Activated naive CD4-positive, alpha-beta T cell treated with anti-CD3 and anti-CD28 coated beads for 36 hours (primary cell): ENCODE measurements at regions of chr14 and their contacts with region 1.

Region 1: GRCh38 chr14:71320107-71320733 is 413.0 kb downstream of the PCNX1 start:
- DNase-seq: peak; percentile 99
- H3K4me3 Mint-ChIP-seq: peak within 1 kb of the TSS; percentile 83
- H3K27ac Mint-ChIP-seq: peak within 1 kb of the TSS; percentile 71
- H3K4me1 Mint-ChIP-seq: peaks cover 39% of the 10 kb centered on the region
- H3K27me3 Mint-ChIP-seq: no peaks in the 10 kb centered on the region

Region 2: GRCh38 chr14:70809543-70810244 is 510.5 kb before region 1 on chr14:
- CTCF ChIA-PET with region 1: no interaction called
- intact Hi-C with region 1: loop called (anchors 10 kb)
- DNase-seq: peak; percentile 96
- H3K4me3 Mint-ChIP-seq: no peak overlapping the region
- H3K27ac Mint-ChIP-seq: peak overlapping the region; percentile 57
- H3K4me1 Mint-ChIP-seq: peaks cover 9% of the 10 kb centered on the region
- H3K27me3 Mint-ChIP-seq: no peaks in the 10 kb centered on the region

Region 3: DNA sequence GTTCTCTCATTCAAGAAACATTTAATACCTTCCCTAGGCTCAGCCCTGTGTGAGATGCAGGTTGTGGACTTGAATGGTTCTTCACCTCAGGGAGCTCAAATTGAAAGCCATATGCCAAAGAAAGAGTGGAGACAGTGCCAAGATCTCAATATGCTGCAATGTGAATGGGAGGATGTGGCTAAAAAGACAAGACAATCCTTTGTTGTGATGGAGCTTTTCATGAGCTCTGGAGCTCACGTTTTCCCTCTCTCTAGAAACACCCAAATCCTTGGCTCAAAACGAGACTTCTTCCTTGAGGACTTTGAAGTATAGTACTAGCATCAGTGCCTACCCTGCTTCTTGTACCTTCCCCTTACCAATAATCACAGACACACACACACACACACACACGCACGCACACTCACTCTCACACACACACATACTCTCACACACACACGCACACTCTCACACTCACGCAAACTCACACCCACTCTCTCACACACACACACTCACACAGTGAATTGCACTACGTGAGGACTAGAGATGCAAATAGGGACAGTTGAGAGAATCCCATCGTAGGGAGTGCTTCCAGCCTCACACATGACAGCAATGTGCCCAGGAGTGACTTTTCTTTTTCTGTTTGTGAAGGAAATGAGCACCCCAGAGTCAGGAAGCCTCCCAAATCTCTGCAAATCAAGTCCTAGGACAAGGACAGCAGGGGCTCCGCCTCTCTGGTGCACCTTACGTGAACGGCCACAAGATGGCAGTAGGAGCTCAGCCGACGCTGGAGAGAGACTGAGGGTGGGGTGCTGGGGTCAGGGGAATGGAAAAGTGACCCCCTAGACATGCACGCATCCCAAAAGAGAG is 181.5 kb before region 1 on chr14:
- CTCF ChIA-PET with region 1: no interaction called
- intact Hi-C with region 1: loop called (anchors 2 kb)
- DNase-seq: peak; percentile 67
- H3K4me3 Mint-ChIP-seq: no peak overlapping the region
- H3K27ac Mint-ChIP-seq: no peak overlapping the region
- H3K4me1 Mint-ChIP-seq: peaks cover 17% of the 10 kb centered on the region
- H3K27me3 Mint-ChIP-seq: no peaks in the 10 kb centered on the region

Region 4: DNA sequence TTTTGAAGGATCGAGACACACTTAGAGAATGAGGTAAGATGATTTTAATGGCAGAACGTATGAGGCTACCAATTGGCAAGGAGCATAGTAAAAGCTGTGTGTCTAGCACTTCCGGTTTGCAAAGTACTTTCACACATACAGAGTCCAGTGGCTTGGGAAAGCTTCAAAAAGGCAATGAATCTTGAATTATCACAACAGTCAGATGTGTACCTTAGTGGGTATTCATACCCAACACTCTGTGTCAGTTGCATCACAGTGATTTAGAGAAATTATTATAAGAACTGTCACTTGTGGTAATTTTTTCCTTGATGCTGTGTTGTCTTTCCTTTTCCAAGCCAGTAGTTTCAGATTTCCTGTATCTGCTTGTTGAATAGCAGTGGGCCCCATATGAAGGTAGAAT is 11.2 kb after region 1 on chr14:
- CTCF ChIA-PET with region 1: interaction called, 3 read pairs
- intact Hi-C with region 1: loop called (anchors 1 kb)
- DNase-seq: no peak
- H3K4me3 Mint-ChIP-seq: no peak overlapping the region
- H3K27ac Mint-ChIP-seq: no peak overlapping the region
- H3K4me1 Mint-ChIP-seq: peaks cover 64% of the 10 kb centered on the region
- H3K27me3 Mint-ChIP-seq: no peaks in the 10 kb centered on the region

Region 5: DNA sequence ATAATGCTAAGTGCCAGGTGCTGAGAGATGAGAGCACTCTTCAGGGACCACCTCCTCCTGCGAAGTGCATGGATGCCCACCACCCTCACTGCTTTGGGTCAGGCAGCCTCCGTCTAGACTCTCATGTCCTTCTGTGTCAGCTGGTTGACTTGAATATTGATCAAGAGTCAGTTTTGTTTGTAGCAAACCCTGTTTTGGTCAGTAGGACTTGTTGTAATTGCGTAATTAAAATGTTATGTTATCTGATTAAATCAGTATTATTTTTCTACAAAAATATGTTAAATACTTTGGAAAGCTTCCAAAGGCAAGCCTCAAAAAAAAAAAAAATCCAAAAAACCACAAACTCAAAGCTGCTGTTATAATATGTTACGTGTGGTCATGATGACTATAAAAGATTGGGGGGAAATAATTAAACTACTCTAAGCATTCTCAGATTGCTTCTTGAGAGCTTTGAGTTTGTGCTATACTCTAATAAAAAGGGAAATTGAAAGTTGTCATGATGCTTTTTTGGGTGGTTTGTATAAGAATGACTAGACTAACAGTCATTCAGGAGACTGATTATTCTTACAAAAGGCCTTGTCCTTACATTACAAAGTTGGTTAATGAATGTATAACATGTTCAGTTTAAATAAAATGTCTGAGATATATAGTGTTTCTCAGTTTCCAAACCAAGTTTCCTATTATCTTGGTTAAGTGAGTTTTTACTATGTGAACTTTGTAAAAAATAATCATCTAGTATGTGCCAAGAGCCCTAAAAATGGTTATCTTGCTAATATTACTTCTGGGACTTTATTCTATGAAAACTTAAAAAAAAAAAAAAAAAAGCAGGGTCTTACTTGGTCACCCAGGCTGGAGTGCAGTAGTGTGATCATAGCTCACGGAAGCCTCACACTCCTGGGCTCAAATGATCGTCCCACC is 152.1 kb after region 1 on chr14:
- CTCF ChIA-PET with region 1: no interaction called
- intact Hi-C with region 1: loop called (anchors 5 kb)
- DNase-seq: no peak
- H3K4me3 Mint-ChIP-seq: no peak overlapping the region
- H3K27ac Mint-ChIP-seq: no peak overlapping the region
- H3K4me1 Mint-ChIP-seq: peaks cover 42% of the 10 kb centered on the region
- H3K27me3 Mint-ChIP-seq: no peaks in the 10 kb centered on the region

Region 6: DNA sequence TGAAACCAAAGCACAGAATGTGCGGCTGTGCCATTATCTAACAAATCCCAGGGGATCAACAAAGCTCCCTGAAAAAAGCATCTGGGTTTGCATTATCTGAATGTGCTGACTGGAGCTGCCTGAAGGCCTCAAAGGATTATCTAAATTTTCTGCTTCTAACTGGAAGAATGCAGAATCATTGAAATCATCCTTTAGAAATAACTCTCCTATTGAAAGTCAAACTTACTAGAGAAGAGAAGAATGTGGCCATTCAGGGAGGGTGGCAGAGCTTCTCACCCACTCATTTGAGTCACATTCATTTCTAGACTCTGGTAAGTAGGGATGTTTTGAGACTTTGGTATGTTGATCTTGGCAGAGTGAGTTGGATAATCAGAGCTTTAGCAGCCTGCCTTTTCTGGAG is 391.4 kb after region 1 on chr14:
- CTCF ChIA-PET with region 1: no interaction called
- intact Hi-C with region 1: loop called (anchors 10 kb)
- DNase-seq: no peak
- H3K4me3 Mint-ChIP-seq: no peak overlapping the region
- H3K27ac Mint-ChIP-seq: no peak overlapping the region
- H3K4me1 Mint-ChIP-seq: peaks cover 12% of the 10 kb centered on the region
- H3K27me3 Mint-ChIP-seq: no peaks in the 10 kb centered on the region

Region 7: DNA sequence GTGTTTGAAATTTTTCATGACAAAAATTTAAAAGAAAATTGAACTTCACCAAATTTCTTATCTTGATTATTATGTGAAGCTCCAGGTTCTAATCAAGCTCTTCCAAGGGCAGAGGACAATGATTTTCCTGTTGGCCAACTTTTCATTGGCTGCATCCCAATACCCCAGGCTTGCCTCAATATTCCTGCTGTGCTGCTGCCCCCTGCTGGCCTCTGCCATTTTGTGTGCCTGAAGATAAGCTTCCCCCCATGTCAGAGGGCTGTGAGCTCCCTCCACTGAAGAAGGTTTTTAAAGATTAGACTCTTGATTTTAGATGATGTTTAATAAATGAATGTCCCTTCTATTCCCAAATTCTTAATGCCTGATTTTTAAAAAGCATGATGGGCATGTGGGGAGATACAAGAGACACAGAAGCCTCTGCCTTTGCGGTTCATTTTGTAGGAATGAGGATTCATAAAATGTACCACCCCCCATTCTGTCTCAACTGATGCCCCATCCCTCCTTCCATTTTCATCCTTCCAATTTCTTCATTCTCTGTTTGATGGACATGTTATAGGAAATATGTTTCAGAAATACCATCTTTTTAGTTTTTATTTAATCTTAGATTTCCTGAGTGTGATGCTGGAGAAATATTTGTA is 535.3 kb after region 1 on chr14:
- CTCF ChIA-PET with region 1: no interaction called
- intact Hi-C with region 1: loop called (anchors 5 kb)
- DNase-seq: peak; percentile 76
- H3K4me3 Mint-ChIP-seq: no peak overlapping the region
- H3K27ac Mint-ChIP-seq: no peak overlapping the region
- H3K4me1 Mint-ChIP-seq: peaks cover 4% of the 10 kb centered on the region
- H3K27me3 Mint-ChIP-seq: peaks cover 48% of the 10 kb centered on the region